CD14-positive monocyte (primary cell): ENCODE measurements at regions of chr2 and their contacts with region 1.

Region 1: GRCh38 chr2:117936871-117937428 is 76.9 kb downstream of the CCDC93 start:
- DNase-seq: no peak
- H3K4me3 ChIP-seq: no peak overlapping the region
- H3K4me3 Mint-ChIP-seq: no peak overlapping the region
- H3K27ac ChIP-seq: no peak overlapping the region
- H3K27ac Mint-ChIP-seq: no peak overlapping the region
- H3K4me1 ChIP-seq: no peaks in the 10 kb centered on the region
- H3K4me1 Mint-ChIP-seq: no peaks in the 10 kb centered on the region
- H3K27me3 ChIP-seq: no peaks in the 10 kb centered on the region
- H3K27me3 Mint-ChIP-seq: peaks cover 0 to 2% (median 0%) of the 10 kb centered on the region in 3 donors
- CTCF ChIP-seq: no peak

Region 2: DNA sequence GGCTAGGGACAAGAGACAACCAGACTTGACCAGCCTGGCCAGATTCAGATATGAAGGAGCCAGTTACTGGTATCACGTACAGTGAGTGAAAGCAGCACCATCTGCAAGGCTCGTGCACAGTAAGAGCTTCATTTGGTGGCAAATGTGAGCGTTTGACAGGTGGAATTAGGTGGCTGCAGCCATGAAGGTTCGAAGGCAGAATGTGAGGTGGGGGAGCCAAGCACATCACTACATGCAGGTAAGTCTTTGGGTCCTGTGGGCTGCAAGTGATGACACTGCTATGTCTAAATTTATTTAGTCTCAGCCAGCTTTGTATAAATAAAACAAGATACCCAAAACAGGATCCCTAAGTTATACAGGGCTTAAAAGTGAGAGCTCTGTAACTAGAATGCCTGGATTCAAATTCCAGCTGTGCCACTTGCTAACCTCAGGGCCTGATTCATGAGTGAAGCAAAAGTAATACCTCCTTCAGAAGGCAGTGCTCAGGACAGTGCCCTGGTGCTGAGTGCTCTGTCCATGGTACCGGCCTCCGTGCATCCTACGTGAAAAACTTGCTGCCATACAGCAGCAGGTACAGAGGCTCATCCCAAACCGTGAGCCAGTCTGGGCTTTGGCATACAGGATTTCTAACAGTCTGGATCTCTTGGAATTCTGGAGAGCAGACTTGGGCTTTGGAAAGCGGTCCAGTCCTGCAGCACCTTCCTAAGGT is 103.9 kb before region 1 on chr2:
- intact Hi-C with region 1: loop called in 1 of 2 experiments (anchors 5 kb)
- DNase-seq: no peak
- H3K4me3 ChIP-seq: no peak overlapping the region
- H3K4me3 Mint-ChIP-seq: no peak overlapping the region
- H3K27ac ChIP-seq: no peak overlapping the region
- H3K27ac Mint-ChIP-seq: peak overlapping the region in 2 of 7 donors; percentile 23 to 28
- H3K4me1 ChIP-seq: peaks cover 8 to 11% of the 10 kb centered on the region in 2 donors
- H3K4me1 Mint-ChIP-seq: peaks cover 11% of the 10 kb centered on the region
- H3K27me3 ChIP-seq: peaks cover 0 to 13% of the 10 kb centered on the region in 2 donors
- H3K27me3 Mint-ChIP-seq: peaks cover 13 to 16% (median 15%) of the 10 kb centered on the region in 3 donors
- CTCF ChIP-seq: no peak

Region 3: GRCh38 chr2:117888897-117889296 is 48.1 kb before region 1 on chr2:
- intact Hi-C with region 1: no loop called
- DNase-seq: no peak
- H3K4me3 ChIP-seq: no peak overlapping the region
- H3K4me3 Mint-ChIP-seq: no peak overlapping the region
- H3K27ac ChIP-seq: no peak overlapping the region
- H3K27ac Mint-ChIP-seq: no peak overlapping the region
- H3K4me1 ChIP-seq: no peaks in the 10 kb centered on the region
- H3K4me1 Mint-ChIP-seq: no peaks in the 10 kb centered on the region
- H3K27me3 ChIP-seq: no peaks in the 10 kb centered on the region
- H3K27me3 Mint-ChIP-seq: peaks cover 4 to 5% (median 4%) of the 10 kb centered on the region in 3 donors
- CTCF ChIP-seq: no peak